PC-3 (cell line): ENCODE measurements at regions of chr5 and their contacts with region 1.

Region 1: GRCh38 chr5:177425801-177426565 is 493 bp upstream of the GRK6 start:
- DNase-seq: peak; percentile 100
- ATAC-seq: peak; percentile 91
- H3K4me3 ChIP-seq: peak overlapping the region; percentile 72
- H3K27ac ChIP-seq: peak overlapping the region; percentile 72
- H3K4me1 ChIP-seq: peaks cover 19% of the 10 kb centered on the region
- H3K27me3 ChIP-seq: no peaks in the 10 kb centered on the region
- CTCF ChIP-seq: no peak

Region 2: DNA sequence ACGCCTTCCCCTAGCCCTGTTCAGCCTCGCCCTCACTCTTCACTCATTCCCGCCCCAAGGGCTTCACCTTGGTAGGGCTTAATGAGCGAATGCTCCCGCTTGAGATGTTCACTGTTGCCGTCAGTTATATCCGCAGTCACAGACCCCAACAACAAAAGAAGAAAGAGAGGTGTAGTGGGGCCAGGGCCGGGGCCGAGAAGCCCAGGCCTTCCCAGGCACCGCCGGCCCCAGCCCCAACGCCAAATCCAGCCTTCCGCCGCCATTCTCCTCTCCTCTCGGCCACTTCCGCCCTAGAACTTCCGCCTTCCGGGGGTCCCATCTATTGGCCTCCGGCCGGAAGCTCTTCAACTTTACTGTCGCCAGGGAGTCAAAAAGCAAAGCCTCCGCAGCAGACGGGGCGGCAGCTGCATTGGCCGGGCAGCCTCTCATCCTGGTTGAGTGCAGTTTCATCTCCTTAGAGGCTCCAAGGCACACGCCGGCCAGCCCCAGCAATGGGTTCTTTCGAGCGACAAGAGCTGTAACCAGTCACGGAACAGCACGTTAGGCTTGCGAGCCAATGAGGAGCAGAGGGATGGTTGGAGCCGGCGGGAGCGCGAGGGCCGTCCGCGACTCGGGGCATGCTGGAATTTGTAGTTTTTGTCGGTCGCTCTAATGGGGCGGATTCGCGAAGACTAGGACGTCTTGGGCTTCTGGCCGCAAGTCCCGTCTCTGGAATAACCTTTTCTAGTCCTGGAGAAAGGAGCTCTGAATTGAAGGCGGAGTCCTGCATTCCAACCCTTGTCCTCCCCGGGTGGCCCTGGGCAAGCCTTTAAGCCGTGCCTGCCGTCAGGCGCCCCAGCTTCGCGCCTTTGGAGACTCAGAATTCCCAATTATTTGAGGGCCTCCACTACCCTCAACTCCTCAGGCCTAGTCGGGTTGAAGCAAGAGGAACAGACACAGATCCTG is 74.3 kb before region 1 on chr5 and contains the start of gene LMAN2:
- CTCF ChIA-PET with region 1: interaction called, 10 read pairs
- POLR2A ChIA-PET with region 1: interaction called, 3 read pairs
- intact Hi-C with region 1: no loop called
- DNase-seq: peak; percentile 94
- ATAC-seq: peak; percentile 94
- H3K4me3 ChIP-seq: peak within 1 kb of the TSS; percentile 93
- H3K27ac ChIP-seq: peak within 1 kb of the TSS; percentile 93
- H3K4me1 ChIP-seq: peaks cover 36% of the 10 kb centered on the region
- H3K27me3 ChIP-seq: no peaks in the 10 kb centered on the region
- CTCF ChIP-seq: no peak
- total RNA-seq, gene LMAN2: 310 and 369 TPM in 2 replicates

Region 3: DNA sequence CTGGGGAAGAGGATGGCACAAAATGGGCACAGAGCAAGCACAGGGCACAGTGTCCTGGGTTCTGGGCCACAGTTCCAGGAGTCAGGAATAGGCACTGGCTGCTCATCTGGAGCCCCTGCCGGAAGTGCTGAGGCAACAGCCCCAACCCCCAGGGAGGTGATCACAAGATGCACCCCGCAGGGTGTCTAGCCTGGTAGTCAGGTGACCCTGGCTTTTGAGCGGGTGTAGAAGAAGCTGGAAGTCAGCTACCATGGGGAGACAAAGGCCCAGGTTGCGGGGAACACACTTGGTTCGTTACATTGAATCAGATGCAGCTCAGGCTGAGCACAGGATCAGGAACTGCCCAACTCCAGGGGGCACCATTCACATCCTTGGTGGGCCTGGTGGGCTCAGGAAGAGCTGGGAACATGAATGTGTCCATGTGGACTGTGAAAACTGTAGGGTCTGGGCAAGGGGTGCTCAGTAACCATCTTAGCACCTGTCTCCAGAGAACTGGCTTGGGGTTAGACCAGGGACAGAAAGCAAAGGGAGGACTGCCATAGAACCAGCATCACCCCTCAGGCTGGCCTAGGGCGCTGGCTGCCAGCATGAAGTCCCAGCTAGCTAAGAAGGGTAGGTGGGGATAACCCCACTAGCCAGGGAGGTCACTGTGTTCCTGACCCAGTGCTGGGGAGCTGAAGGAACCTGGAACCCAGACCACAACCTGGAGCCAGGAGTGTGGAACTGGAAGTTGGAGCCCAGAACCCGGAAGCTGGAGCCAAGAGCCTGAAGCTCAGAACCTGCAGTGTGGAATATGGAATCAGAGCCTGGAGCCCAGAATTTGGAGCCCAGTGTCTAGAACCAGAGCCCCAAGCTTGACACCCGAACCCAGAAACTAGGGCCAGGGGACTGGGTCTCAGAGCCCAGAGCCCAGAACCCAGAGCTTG is 47.9 kb before region 1 on chr5:
- CTCF ChIA-PET with region 1: no interaction called
- POLR2A ChIA-PET with region 1: interaction called, 12 read pairs
- intact Hi-C with region 1: no loop called
- DNase-seq: no peak
- ATAC-seq: no peak
- H3K4me3 ChIP-seq: no peak overlapping the region
- H3K27ac ChIP-seq: no peak overlapping the region
- H3K4me1 ChIP-seq: peaks cover 8% of the 10 kb centered on the region
- H3K27me3 ChIP-seq: no peaks in the 10 kb centered on the region
- CTCF ChIP-seq: no peak

Region 4: DNA sequence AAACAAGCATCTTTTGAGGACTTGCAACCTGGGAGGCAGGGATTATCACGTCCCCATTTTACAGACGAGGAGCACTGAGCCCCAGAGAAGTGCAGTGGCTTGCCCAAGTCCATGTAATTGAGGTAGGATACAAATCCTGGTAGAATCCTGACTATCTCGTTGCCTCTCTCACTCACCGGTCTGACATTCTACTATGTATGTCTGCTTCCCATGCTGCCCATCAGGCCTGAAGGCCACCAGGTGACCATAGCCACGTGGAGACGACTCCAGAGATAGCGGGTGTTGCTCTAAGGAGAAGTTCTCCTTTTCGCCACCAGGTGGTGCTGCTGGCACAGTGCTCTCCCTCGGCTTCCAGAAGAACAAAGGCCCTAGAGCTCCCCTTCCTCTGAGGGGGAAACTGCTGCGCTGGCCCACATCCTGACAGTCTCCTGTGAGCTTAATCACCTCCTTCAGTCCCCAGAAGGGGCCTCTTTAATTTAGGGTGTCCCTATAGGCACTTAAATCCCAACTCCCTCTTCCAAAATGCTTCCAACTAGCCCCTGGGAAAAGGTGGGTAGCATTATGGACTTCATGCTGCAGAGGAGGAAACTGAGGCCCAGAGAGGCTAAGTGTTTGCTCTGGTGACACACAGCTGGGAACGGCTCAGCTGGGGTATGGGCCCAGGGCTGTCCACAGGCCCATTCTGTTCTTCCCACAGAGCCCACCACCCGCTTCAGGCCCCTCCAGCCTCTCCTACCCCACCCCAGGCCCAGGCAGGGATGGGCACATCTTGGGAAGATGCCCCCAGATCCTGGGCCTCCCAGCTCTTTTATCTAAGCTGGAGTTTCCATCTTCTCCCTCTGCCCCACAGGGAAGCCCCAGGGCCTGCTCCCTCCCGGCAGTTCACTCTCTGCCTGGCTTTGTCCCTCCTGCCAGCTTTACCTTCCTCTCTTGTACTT is 35.4 kb before region 1 on chr5:
- CTCF ChIA-PET with region 1: interaction called, 12 read pairs
- POLR2A ChIA-PET with region 1: interaction called, 4 read pairs
- intact Hi-C with region 1: no loop called
- DNase-seq: peak; percentile 95
- ATAC-seq: peak; percentile 73
- H3K4me3 ChIP-seq: peak overlapping the region; percentile 24; the same call in 1 of the 2 replicates
- H3K27ac ChIP-seq: peak overlapping the region; percentile 95
- H3K4me1 ChIP-seq: peaks cover 27% of the 10 kb centered on the region
- H3K27me3 ChIP-seq: no peaks in the 10 kb centered on the region
- CTCF ChIP-seq: peak; percentile 93

Region 5: DNA sequence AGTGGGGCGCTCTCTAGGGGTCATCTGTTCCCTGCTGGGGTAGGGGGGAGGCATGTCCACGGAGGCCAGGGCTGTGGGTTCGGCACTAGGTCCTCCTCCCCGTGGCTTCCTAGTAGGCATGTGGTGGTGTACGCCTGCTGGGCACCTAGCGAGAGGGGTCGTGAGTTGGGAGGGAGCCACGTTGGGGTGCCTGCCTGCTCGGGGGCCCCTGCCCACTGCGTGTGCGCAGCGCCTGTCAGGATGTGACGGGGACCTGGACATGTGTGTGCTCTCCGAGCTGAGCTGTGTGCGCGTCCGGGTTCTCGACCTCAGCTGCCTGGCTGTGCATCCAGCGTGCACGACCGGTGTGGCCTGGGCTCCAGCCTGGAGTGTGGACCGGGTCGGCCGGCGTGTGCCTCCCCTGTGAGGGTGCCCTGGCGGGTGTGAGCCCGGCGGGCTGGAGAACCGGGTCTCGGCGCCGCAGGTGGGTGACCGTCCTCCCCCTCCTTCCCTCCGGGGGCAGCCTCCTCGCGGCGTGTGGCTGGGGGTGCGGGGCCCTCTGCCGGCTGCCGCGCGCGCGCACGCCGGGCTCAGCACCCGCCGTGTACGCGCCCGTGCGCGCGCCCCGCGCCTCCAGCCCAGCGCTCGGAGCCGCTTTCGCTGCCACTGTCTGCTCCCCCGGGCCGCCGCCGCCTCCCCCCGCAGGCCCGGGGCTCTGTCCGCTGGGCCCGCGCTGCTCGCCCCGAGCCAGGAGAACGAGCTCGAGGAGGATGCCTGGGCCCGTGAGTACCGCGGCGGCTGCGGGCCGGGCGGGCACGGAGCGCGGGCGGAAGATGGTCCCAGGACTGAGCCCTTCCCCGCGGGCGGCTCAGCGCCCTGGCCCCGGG is 20.4 kb after region 1 on chr5 and contains the start of gene PRR7:
- CTCF ChIA-PET with region 1: interaction called, 4 read pairs
- POLR2A ChIA-PET with region 1: interaction called, 16 read pairs
- intact Hi-C with region 1: loop called (anchors 2 kb)
- DNase-seq: peak; percentile 79
- ATAC-seq: peak; percentile 36
- H3K4me3 ChIP-seq: peak within 1 kb of the TSS; percentile 82
- H3K27ac ChIP-seq: peak within 1 kb of the TSS; percentile 85
- H3K4me1 ChIP-seq: peaks cover 23% of the 10 kb centered on the region
- H3K27me3 ChIP-seq: no peaks in the 10 kb centered on the region
- CTCF ChIP-seq: no peak
- total RNA-seq, gene PRR7: 40.6 and 47.2 TPM in 2 replicates

Region 6: GRCh38 chr5:177465044-177465443 is 39.1 kb after region 1 on chr5:
- CTCF ChIA-PET with region 1: no interaction called
- POLR2A ChIA-PET with region 1: no interaction called
- intact Hi-C with region 1: no loop called
- DNase-seq: no peak
- ATAC-seq: no peak
- H3K4me3 ChIP-seq: no peak overlapping the region
- H3K27ac ChIP-seq: no peak overlapping the region
- H3K4me1 ChIP-seq: no peaks in the 10 kb centered on the region
- H3K27me3 ChIP-seq: no peaks in the 10 kb centered on the region
- CTCF ChIP-seq: no peak